MCF 10A (cell line): ENCODE measurements at regions of chr12 and their contacts with region 1.

Region 1: GRCh38 chr12:109804820-109805761 is 28.1 kb downstream of the TRPV4 start:
- DNase-seq: peak; percentile 55
- H3K4me3 Mint-ChIP-seq: no peak overlapping the region
- H3K27ac Mint-ChIP-seq: no peak overlapping the region
- H3K4me1 Mint-ChIP-seq: no peaks in the 10 kb centered on the region
- H3K27me3 Mint-ChIP-seq: no peaks in the 10 kb centered on the region
- CTCF ChIP-seq: peak; percentile 96

Region 2: GRCh38 chr12:109795023-109795422 is 10.1 kb before region 1 on chr12:
- CTCF ChIA-PET with region 1: interaction called, 36 read pairs
- POLR2A ChIA-PET with region 1: no interaction called
- intact Hi-C with region 1: no loop called
- DNase-seq: peak; percentile 81
- H3K4me3 Mint-ChIP-seq: no peak overlapping the region
- H3K27ac Mint-ChIP-seq: no peak overlapping the region
- H3K4me1 Mint-ChIP-seq: peaks cover 11% of the 10 kb centered on the region
- H3K27me3 Mint-ChIP-seq: no peaks in the 10 kb centered on the region
- CTCF ChIP-seq: no peak

Region 3: GRCh38 chr12:109833307-109834189 is 28.5 kb after region 1 on chr12 and contains the start of gene TRPV4:
- CTCF ChIA-PET with region 1: interaction called, 300 read pairs
- POLR2A ChIA-PET with region 1: no interaction called
- intact Hi-C with region 1: no loop called
- DNase-seq: no peak
- H3K4me3 Mint-ChIP-seq: no peak within 1 kb of the TSS
- H3K27ac Mint-ChIP-seq: no peak within 1 kb of the TSS
- H3K4me1 Mint-ChIP-seq: peaks cover 17% of the 10 kb centered on the region
- H3K27me3 Mint-ChIP-seq: no peaks in the 10 kb centered on the region
- CTCF ChIP-seq: no peak
- total RNA-seq, gene TRPV4: 0.09 and 0.15 TPM in 2 replicates

Region 4: GRCh38 chr12:109858764-109859163 is 53.7 kb after region 1 on chr12:
- CTCF ChIA-PET with region 1: interaction called, 45 read pairs
- POLR2A ChIA-PET with region 1: no interaction called
- intact Hi-C with region 1: no loop called
- DNase-seq: no peak
- H3K4me3 Mint-ChIP-seq: no peak overlapping the region
- H3K27ac Mint-ChIP-seq: no peak overlapping the region
- H3K4me1 Mint-ChIP-seq: no peaks in the 10 kb centered on the region
- H3K27me3 Mint-ChIP-seq: no peaks in the 10 kb centered on the region
- CTCF ChIP-seq: no peak

Region 5: GRCh38 chr12:109927622-109928021 is 122.5 kb after region 1 on chr12:
- CTCF ChIA-PET with region 1: interaction called, 18 read pairs
- POLR2A ChIA-PET with region 1: no interaction called
- intact Hi-C with region 1: loop called (anchors 1 kb)
- DNase-seq: peak; percentile 67
- H3K4me3 Mint-ChIP-seq: no peak overlapping the region
- H3K27ac Mint-ChIP-seq: no peak overlapping the region
- H3K4me1 Mint-ChIP-seq: no peaks in the 10 kb centered on the region
- H3K27me3 Mint-ChIP-seq: no peaks in the 10 kb centered on the region
- CTCF ChIP-seq: peak; percentile 66